ENCODE measurements at regions of chr9 and their contacts with region 1.

Region 1: GRCh38 chr9:78369639-78370219 is 72.8 kb downstream of the PSAT1 start:
- DNase-seq: peak; percentile 80
- ATAC-seq: peak; percentile 63

Region 2: DNA sequence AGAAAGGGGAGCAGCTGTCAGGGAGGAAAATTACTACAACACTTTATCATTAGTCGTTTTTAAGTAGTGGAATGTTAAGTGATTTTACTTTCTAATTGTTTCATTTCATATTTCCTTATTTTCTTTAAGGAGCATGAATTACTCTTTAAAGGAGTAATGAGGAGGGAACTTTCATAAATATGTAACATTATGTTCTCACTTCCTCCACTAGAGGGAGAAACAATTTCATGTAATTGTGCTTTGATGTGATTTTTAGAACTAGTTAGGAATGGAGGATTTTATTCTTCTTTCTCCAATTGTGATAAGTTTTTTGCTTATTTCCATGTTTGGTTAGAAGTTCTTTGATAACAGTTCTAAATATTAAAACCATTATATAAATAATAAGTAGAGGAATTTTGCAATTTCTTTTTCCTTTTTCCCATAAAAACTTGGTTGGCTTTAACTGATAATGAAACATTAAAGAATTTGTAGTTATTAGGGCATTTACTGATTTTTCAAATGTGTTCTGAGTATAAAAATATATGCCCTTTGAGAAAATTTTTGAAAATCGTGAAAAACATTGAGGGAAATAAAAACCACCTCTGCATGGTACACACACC is 108.2 kb before region 1 on chr9:
- intact Hi-C with region 1: loop called (anchors 5 kb)
- DNase-seq: no peak
- ATAC-seq: no peak

Measured in left ventricle myocardium superior (tissue), 1 donor.